ENCODE measurements at regions of chr15 and their contacts with region 1.

Region 1: DNA sequence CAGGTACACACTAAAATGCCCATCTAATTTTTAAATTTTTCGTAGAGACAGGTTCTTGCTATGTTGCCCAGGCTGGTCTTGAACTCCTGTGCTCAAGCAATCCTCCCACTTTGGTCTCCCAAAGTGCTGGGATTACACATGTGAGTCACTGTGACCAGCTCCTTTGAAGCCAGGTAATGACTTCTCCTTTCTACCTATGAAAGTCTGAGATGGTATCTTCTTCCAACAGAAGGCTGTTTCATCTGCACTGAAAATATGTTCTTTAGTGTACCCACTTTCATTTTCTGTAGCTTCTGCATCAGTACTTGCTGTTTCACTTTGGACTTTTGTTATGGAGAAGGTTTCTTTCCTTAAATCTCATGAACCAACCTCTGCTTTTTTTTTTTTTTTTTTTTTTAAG is 8.8 kb downstream of the OIP5 start:
- DNase-seq: no peak
- ATAC-seq: no peak
- H3K4me3 ChIP-seq: no peak overlapping the region
- H3K27ac ChIP-seq: no peak overlapping the region
- H3K4me1 ChIP-seq: no peaks in the 10 kb centered on the region
- H3K27me3 ChIP-seq: no peaks in the 10 kb centered on the region
- CTCF ChIP-seq: no peak

Region 2: DNA sequence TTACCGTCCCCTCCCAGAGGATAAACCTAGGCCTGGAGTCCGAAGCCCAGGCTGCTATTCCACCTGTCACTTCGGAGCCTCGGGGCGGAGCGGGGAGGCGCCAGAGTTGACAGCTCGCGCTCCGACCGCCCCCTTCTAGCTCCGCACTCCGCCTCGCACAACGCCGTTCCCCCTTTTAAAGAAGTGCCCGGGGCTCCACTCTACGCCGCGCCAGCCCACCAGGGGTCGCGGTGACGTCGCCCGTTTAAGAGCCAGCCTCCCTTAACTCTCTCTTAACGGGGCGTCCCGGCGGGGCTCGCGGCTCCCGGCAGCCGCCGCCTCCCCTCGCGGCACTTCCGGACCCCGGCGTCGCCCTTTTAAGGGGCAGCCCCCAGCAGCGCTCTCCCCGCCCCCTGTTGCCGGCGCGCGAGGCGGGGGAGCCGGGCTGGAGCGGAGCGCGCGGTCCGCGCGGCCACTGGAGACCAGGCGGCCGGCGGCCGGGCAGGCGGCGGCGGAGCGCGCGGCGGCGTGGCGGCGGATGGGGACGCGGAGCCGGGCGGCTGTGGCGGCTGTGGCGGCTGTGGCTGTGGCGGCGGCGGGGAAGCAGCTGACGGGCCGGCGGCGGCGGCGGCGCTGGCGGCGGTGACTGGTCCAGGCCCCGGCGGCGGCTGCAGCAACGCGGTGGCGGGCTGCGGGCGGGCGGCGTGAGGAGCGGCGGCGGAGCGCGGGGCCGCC is 1000.2 kb before region 1 on chr15 and contains the start of gene INAFM2:
- intact Hi-C with region 1: no loop called
- DNase-seq: peak; percentile 90 to 94
- ATAC-seq: peak; percentile 90 to 93 (median 92)
- H3K4me3 ChIP-seq: peak within 1 kb of the TSS; percentile 63 to 93 (median 82)
- H3K27ac ChIP-seq: peak within 1 kb of the TSS; percentile 78 to 94 (median 90)
- H3K4me1 ChIP-seq: peaks cover 7 to 54% (median 42%) of the 10 kb centered on the region in 9 donors
- H3K27me3 ChIP-seq: no peaks in the 10 kb centered on the region
- CTCF ChIP-seq: peak; percentile 68 to 86 (median 77)
- total RNA-seq, gene INAFM2: 32.5 to 63.9 (median 40.9) TPM

Region 3: GRCh38 chr15:41125931-41126642 is 197.5 kb before region 1 on chr15:
- intact Hi-C with region 1: loop called in 1 of 10 experiments (anchors 10 kb)
- DNase-seq: no peak
- ATAC-seq: no peak
- H3K4me3 ChIP-seq: no peak overlapping the region
- H3K27ac ChIP-seq: no peak overlapping the region
- H3K4me1 ChIP-seq: no peaks in the 10 kb centered on the region
- H3K27me3 ChIP-seq: peaks cover 0 to 26% (median 8%) of the 10 kb centered on the region in 7 donors
- CTCF ChIP-seq: no peak

Region 4: DNA sequence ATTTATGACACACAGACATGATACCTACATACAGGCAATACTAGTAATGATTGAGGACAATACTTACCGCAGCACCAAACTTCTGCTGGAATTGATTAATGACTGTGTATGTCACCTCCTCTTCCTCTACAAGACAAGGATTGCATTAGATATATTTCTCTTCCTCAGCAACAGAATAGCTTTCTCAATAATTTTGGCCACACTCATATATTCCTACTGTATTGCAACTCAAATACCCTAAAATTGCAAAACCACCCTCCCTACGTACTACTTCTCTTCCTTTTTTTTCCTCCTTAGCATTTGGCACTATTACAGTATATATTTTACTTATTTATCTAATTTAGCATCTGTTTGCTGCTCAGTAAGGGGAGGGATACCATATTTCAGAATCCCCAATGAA is 107.9 kb before region 1 on chr15:
- intact Hi-C with region 1: no loop called
- DNase-seq: no peak
- ATAC-seq: no peak
- H3K4me3 ChIP-seq: no peak overlapping the region
- H3K27ac ChIP-seq: no peak overlapping the region
- H3K4me1 ChIP-seq: peaks cover 0 to 10% (median 0%) of the 10 kb centered on the region in 9 donors
- H3K27me3 ChIP-seq: peaks cover 0 to 32% (median 12%) of the 10 kb centered on the region in 7 donors
- CTCF ChIP-seq: no peak

Region 5: DNA sequence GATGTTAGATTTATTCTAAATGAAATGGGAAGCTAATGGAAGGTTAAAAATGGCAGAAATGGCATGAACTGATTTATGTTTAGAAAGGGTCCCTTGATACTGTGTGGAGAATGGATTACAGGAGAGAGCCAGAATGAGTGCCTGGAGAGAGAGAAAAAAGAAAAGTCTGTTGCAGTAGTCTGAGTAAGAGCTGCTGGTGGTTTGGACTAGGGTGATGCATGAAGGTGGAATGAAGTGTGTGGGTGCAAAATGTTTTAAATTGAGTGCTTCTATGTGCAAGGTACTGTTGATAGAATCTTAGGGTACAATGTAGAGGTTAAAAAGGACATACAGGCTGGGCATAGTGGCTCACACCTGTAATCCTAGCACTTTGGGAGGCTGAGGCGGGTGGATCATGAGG is 325.2 kb after region 1 on chr15:
- intact Hi-C with region 1: no loop called
- DNase-seq: no peak
- ATAC-seq: no peak
- H3K4me3 ChIP-seq: no peak overlapping the region
- H3K27ac ChIP-seq: no peak overlapping the region
- H3K4me1 ChIP-seq: peaks cover 0 to 18% (median 0%) of the 10 kb centered on the region in 9 donors
- H3K27me3 ChIP-seq: no peaks in the 10 kb centered on the region
- CTCF ChIP-seq: no peak